Posterior cingulate gyrus (tissue), 11 donors: ENCODE measurements at regions of chr17 and their contacts with region 1.

Region 1: DNA sequence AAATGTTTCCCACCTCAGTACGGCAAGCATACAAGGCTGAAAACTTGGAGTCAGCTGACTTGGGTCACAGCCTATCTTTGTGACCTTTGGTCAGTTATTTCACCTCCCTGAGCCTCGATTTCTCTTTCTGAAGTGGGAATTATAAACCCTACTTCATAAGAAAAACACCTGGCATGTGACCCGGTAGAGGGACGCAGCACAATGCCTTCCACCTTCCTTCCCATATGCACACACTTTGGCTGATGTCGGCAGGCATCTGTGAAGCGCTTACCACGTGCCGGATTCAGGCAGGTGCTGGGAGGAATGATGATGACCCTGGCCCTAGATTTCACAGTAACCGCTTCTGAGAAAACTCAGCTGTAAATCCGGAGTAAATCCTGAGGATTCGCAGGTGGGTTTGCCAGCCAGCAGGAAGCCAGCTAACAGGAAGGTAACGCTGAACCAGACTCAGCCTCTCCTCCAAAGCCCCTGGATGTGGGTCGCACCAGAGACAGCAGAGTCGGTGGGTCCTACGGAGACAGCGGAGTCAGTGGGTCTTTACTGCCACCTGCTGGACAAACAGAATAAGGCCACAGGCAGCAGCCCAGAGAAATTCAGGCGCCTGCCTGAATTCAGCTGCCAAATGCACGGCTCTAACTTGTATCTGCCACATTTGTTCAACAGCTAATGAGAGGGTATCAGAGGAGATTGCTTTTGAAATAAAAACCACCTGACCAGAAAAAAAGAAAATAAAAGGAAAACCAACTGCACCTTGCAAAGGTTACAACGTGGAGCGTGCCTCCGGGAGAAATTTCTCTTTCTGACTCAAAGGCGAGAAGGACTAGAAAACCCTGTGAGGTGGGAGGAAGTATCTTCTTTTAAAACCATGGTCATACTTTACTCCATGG is 16.6 kb downstream of the COPRS start:
- DNase-seq: peak; percentile 45 to 95 (median 76)

Region 2: DNA sequence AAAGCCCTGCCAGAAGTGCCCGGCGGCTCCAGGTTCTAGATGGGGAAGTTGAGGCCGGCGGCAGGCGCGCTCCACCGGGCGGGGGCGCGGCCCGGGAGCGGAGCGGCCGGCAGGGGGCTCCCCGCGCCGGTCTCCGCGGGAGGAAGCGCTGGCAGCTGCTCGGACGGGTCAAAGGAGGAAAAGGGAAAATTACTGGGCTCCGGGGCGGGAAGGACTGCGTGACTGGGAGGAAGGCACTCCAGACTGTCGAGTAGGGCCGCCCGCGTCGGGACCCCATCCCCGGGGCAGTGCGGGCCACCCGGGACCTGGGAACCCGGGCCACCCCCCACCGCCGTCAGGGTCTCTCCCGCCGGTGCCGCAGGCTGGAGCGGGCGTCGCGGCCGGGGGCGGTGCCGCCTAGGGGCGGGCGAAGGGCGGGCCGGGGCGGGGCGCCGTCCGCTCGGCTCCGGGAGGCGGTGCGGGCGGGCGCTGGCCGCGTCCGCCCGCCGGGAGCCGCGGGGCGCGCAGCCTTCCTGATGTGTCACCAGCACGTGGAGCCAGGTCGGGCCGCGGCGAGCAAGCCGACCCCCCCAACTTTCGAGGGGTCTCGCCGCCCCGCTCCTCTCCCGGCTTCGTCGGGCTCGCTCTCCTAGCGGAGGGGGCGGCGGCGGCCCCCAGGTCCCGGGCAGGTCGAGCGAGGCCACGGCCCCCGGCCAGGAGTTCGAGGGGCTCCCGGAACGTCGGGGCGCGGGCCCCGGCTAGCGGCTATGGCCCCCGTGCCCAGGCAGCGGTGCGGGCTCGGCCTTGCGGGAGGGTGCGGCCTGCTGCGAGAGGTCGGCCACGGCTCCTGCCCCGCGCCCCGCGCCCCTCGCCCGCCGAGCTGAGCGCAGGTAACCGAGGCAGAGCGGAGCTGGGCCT is 283.4 kb before region 1 on chr17:
- intact Hi-C with region 1: loop called (anchors 1 kb)
- DNase-seq: peak; percentile 38 to 94 (median 57)

Region 3: GRCh38 chr17:32123782-32124181 is 281.4 kb after region 1 on chr17:
- intact Hi-C with region 1: no loop called
- DNase-seq: no peak